ENCODE measurements at regions of chr19 and their contacts with region 1.

Region 1: GRCh38 chr19:52922841-52923777 is at the start of gene ZNF888:
- DNase-seq: peak; percentile 70 to 96
- H3K4me3 ChIP-seq: peak within 1 kb of the TSS; percentile 79 to 83
- H3K27ac ChIP-seq: peak within 1 kb of the TSS; percentile 88 to 91
- H3K4me1 ChIP-seq: peaks cover 0 to 8% of the 10 kb centered on the region in 2 donors
- H3K27me3 ChIP-seq: no peaks in the 10 kb centered on the region
- CTCF ChIP-seq: no peak
- total RNA-seq, gene ZNF888: 0.43 TPM

Region 2: DNA sequence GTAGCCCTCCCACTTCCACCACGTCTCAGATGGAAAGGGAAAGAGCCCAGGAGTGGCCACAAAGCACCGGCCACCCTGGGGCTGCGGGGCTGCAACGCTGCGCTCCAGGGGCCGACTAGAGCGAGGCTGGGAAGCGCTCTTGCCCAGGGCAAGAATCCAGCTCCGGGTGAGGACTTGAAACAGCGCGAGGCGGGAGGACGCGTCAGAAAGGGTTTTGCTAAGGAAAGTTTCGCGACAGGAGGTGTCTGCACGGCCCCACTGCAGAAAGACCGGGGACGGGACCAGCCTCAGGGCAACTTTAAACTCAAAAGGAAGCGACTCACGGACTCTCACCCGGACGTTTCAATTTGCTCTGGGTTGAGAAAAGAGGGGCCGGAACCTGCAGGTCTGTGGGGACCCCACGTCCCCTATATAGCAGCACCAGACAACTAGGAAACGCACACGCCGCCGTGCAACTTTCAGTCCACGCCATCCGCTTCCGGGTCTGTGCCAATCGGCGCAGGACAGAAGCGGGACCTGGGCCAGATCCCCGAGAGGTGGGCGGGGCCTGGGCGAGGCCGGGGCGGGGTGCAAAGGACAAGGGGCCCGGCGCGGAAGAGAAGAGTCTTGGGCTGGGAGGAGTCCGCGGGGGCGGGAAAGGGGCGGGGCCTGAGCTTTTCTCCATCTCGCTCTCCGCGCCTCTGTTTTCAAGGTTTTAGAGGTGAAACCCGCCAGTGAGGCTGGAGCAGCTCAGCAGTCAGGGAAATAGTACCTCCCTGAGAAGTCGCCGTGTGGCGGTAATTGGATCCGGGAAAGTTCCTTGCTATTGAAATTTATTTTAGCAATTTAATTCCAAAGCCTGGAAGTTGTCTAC is 39.5 kb after region 1 on chr19 and contains the start of gene ZNF816:
- intact Hi-C with region 1: loop called (anchors 1 kb)
- DNase-seq: peak; percentile 92 to 99
- H3K4me3 ChIP-seq: peak within 1 kb of the TSS; percentile 71 to 74
- H3K27ac ChIP-seq: peak within 1 kb of the TSS; percentile 81 to 87
- H3K4me1 ChIP-seq: peaks cover 0 to 9% of the 10 kb centered on the region in 2 donors
- H3K27me3 ChIP-seq: no peaks in the 10 kb centered on the region
- CTCF ChIP-seq: no peak
- total RNA-seq, gene ZNF816: 7.1 TPM

Region 3: DNA sequence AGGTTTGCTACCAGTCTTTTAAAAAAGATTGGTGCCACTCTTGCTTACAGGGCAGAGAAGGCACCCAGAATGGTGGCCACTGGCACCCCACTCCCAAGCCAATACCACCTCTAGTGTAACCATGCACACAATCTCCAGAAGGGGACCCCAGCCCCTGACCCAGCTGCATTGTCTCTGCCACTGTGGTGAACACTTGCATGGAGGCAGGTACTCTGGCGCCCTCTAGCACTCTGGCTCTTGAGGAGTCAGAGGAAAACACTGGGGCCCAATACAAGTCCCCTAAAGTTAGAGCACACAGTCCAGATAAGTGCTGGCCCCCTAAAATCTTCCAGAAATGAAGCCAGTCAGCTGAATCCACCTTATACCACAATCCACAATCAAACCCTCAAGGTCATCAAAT is 96.6 kb after region 1 on chr19:
- intact Hi-C with region 1: no loop called
- DNase-seq: no peak
- H3K4me3 ChIP-seq: no peak overlapping the region
- H3K27ac ChIP-seq: no peak overlapping the region
- H3K4me1 ChIP-seq: no peaks in the 10 kb centered on the region
- H3K27me3 ChIP-seq: no peaks in the 10 kb centered on the region
- CTCF ChIP-seq: no peak

Measured in ascending aorta (tissue), 2 donors.